Heart right ventricle (tissue), 16 donors: ENCODE measurements at regions of chr9 and their contacts with region 1.

Region 1: GRCh38 chr9:100515578-100516494 is 42.9 kb downstream of the TMEFF1 start:
- DNase-seq: no peak
- ATAC-seq: no peak
- H3K4me3 ChIP-seq: no peak overlapping the region
- H3K27ac ChIP-seq: no peak overlapping the region
- H3K4me1 ChIP-seq: no peaks in the 10 kb centered on the region
- H3K27me3 ChIP-seq: no peaks in the 10 kb centered on the region
- CTCF ChIP-seq: no peak

Region 2: DNA sequence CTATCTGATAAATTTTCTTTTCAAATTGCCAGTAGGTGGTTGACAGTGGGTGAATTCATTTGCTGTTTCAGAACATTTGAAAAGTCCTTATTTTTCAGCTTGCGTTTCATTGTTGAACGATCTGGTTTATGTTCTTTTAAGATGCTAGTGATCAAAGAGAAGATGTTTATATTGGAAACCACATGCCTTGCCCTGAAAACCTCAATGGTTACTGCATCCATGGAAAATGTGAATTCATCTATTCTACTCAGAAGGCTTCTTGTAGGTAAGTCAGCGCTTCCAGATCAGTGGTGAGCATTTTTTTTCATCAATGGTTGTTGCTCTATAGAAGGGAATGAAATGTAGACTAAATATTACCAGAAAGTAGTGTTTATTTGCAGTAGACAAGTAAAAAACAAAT is 45.4 kb after region 1 on chr9:
- intact Hi-C with region 1: loop called in 3 of 10 experiments (anchors 10 kb)
- DNase-seq: no peak
- ATAC-seq: no peak
- H3K4me3 ChIP-seq: no peak overlapping the region
- H3K27ac ChIP-seq: no peak overlapping the region
- H3K4me1 ChIP-seq: no peaks in the 10 kb centered on the region
- H3K27me3 ChIP-seq: no peaks in the 10 kb centered on the region
- CTCF ChIP-seq: no peak

Region 3: DNA sequence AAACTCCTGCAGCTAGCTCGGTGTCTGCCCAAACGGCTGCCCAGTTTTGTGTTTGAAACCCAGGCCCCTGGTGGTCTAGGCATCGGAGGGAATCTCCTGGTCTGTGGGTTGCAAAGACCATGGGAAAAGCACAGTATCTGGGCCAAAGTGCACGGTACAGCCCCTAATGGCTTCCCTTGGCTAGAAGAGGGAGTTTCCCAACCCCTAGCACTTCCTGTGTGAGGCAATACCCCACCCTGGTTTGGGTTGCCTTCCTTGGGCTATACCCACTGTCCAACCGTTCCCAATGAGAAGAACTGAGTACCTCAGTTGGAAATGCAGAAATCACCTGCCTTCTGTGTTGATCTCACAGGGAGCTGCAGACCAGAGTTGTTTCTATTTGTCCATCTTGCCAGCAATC is 103.8 kb after region 1 on chr9:
- intact Hi-C with region 1: no loop called
- DNase-seq: no peak
- ATAC-seq: no peak
- H3K4me3 ChIP-seq: no peak overlapping the region
- H3K27ac ChIP-seq: no peak overlapping the region
- H3K4me1 ChIP-seq: no peaks in the 10 kb centered on the region
- H3K27me3 ChIP-seq: no peaks in the 10 kb centered on the region
- CTCF ChIP-seq: no peak